GM10248 (cell line): ENCODE measurements at regions of chr17 and their contacts with region 1.

Region 1: DNA sequence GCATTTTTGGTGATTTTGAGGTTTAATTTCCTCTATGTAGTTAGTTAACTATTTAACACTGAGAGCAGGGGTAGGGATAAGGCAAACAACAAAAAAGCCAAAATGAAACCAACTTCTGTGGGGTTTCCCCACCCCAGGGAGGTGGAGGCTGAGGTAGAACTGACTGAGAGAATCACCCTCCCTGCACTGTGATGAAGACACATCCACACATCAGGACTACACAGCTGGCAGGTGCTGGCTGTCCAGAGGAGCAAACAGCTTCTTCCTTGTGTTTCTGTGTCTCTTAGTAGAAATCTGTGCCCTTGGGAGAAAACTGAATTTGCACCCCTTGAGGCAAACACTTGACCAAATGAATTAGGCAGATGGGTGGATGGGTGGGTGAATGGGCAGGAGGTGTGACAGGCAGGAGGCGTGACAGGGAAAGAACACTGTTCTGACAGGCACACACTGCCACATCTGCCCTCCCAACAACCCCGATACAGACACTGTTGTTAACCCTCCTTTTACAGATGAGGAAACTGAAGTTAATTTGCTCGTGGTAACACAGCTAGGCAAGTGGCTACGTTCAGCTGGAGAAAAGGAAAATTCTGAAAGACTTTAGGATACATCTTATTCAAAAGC is 62.9 kb upstream of the AMZ2 start:
- DNase-seq: peak; percentile 76
- CTCF ChIP-seq: no peak

Region 2: GRCh38 chr17:68035523-68036303 is 149.2 kb before region 1 on chr17 and contains the start of gene KPNA2:
- CTCF ChIA-PET with region 1: no interaction called
- POLR2A ChIA-PET with region 1: interaction called, 12 read pairs
- DNase-seq: peak; percentile 98
- CTCF ChIP-seq: no peak

Region 3: GRCh38 chr17:68161644-68162428 is 23.1 kb before region 1 on chr17:
- CTCF ChIA-PET with region 1: no interaction called
- POLR2A ChIA-PET with region 1: no interaction called
- DNase-seq: no peak
- CTCF ChIP-seq: no peak

Region 4: GRCh38 chr17:68314916-68315535 is 130.1 kb after region 1 on chr17:
- CTCF ChIA-PET with region 1: no interaction called
- POLR2A ChIA-PET with region 1: no interaction called
- DNase-seq: no peak
- CTCF ChIP-seq: no peak